Activated naive CD4-positive, alpha-beta T cell treated with anti-CD3 and anti-CD28 coated beads for 36 hours (primary cell): ENCODE measurements at regions of chr6 and their contacts with region 1.

Region 1: GRCh38 chr6:24774696-24775519 is at the start of gene GMNN:
- DNase-seq: peak; percentile 99
- H3K4me3 Mint-ChIP-seq: peak within 1 kb of the TSS; percentile 96
- H3K27ac Mint-ChIP-seq: peak within 1 kb of the TSS; percentile 98
- H3K4me1 Mint-ChIP-seq: peaks cover 30% of the 10 kb centered on the region
- H3K27me3 Mint-ChIP-seq: no peaks in the 10 kb centered on the region
- total RNA-seq, gene GMNN: 84.9 to 85.1 TPM

Region 2: DNA sequence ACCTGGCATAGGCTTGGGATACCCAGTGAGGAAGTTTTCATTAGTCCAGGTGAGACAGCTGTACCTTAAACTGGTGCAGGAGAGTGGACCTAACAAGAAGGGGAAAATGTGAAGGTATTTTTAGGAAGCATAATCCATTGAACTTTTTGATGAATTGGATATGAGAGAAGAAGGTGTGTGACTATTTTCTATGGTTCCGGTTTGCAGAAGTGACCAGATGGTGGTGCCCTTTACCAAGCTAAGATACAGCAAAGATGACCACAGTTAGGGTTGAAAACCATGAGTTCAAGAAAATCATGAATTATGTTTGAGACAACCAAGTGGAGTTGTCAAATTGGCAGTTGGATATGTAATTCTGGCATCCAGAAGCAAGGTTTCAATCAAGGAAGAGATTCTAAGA is 710.8 kb before region 1 on chr6:
- CTCF ChIA-PET with region 1: no interaction called
- intact Hi-C with region 1: no loop called
- DNase-seq: no peak
- H3K4me3 Mint-ChIP-seq: no peak overlapping the region
- H3K27ac Mint-ChIP-seq: no peak overlapping the region
- H3K4me1 Mint-ChIP-seq: no peaks in the 10 kb centered on the region
- H3K27me3 Mint-ChIP-seq: peaks cover 2% of the 10 kb centered on the region

Region 3: GRCh38 chr6:24646782-24647181 is 128.1 kb before region 1 on chr6:
- CTCF ChIA-PET with region 1: no interaction called
- intact Hi-C with region 1: loop called (anchors 5 kb)
- DNase-seq: no peak
- H3K4me3 Mint-ChIP-seq: peak overlapping the region; percentile 84
- H3K27ac Mint-ChIP-seq: no peak overlapping the region
- H3K4me1 Mint-ChIP-seq: peaks cover 13% of the 10 kb centered on the region
- H3K27me3 Mint-ChIP-seq: peaks cover 13% of the 10 kb centered on the region

Region 4: GRCh38 chr6:24743265-24743943 is 31.5 kb before region 1 on chr6:
- CTCF ChIA-PET with region 1: interaction called, 6 read pairs
- intact Hi-C with region 1: loop called (anchors 1 kb)
- DNase-seq: peak; percentile 75
- H3K4me3 Mint-ChIP-seq: peak overlapping the region; percentile 13
- H3K27ac Mint-ChIP-seq: peak overlapping the region; percentile 88
- H3K4me1 Mint-ChIP-seq: peaks cover 28% of the 10 kb centered on the region
- H3K27me3 Mint-ChIP-seq: peaks cover 4% of the 10 kb centered on the region

Region 5: DNA sequence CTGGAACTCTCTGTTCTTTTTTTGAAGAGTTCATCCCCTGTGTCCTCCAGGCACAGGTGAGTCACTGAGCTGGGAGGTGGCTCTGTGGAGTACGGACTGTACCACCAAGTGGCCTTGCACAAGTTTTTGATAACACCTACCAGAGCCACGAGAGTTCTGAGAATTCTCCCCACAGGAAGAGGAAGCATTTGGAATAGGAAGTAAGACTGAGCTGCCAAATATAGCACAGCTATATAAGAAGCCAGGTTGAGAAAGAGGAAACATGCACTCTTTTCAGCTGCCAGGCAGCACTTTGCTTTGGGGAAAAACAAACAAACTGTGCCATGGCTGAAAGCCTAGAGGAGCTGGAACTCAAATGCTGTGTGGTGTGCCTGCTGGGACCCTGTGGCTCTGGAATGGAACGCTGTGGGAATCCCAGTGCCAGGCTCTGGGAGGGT is 231.7 kb after region 1 on chr6:
- CTCF ChIA-PET with region 1: no interaction called
- intact Hi-C with region 1: loop called (anchors 2 kb)
- DNase-seq: peak; percentile 72
- H3K4me3 Mint-ChIP-seq: peak overlapping the region; percentile 31
- H3K27ac Mint-ChIP-seq: peak overlapping the region; percentile 68
- H3K4me1 Mint-ChIP-seq: peaks cover 80% of the 10 kb centered on the region
- H3K27me3 Mint-ChIP-seq: no peaks in the 10 kb centered on the region